ENCODE measurements at regions of chr1 and their contacts with region 1.

Region 1: GRCh38 chr1:77683160-77684148 is 996 bp upstream of the ZZZ3 start:
- DNase-seq: peak; percentile 94 to 96 (median 95)
- ATAC-seq: peak; percentile 66 to 93 (median 88)
- H3K4me3 ChIP-seq: peak overlapping the region; percentile 47 to 88 (median 70)
- H3K27ac ChIP-seq: peak overlapping the region; percentile 86 to 99 (median 94)
- H3K4me1 ChIP-seq: peaks cover 0 to 43% (median 30%) of the 10 kb centered on the region in 12 donors
- H3K27me3 ChIP-seq: no peaks in the 10 kb centered on the region
- CTCF ChIP-seq: peak; percentile 83 to 98 (median 95)
- POLR2A ChIP-seq: peak in 1 of 2 donors; percentile 58

Region 2: GRCh38 chr1:77156214-77156613 is 527.2 kb before region 1 on chr1:
- intact Hi-C with region 1: loop called in 1 of 10 experiments (anchors 10 kb)
- DNase-seq: no peak
- ATAC-seq: no peak
- H3K4me3 ChIP-seq: no peak overlapping the region
- H3K27ac ChIP-seq: no peak overlapping the region
- H3K4me1 ChIP-seq: no peaks in the 10 kb centered on the region
- H3K27me3 ChIP-seq: no peaks in the 10 kb centered on the region
- CTCF ChIP-seq: no peak
- POLR2A ChIP-seq: no peak

Region 3: DNA sequence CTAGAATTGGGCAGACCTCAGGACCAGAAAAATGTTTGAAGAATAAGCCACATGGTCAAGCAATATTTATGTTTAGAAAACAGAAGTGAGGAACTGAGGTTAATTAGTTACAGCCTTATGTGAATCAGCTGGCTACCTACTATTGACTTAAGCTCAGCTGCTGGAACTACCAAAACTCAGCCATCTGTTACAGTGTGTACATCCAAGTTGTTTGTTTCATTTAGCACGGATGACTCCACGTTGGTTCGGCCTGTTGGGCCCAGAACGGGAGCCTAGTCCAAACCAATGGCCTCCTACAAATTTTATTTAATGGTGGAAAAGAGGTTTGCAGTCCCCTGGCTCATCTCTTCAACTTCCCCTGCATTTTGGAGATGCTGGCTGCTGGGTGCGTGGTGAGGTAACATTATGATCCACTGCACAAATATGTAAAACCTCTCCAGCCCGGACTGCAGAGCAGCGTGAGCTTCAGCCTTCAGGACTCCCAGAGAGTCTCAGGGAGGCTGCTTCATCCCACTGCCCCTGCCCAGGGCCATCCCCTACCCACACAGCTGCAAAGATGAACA is 144.4 kb before region 1 on chr1:
- intact Hi-C with region 1: loop called in 2 of 10 experiments (anchors 5 to 10 kb)
- DNase-seq: peak in 2 of 5 donors; percentile 29 to 33
- ATAC-seq: peak; percentile 54 to 84 (median 69)
- H3K4me3 ChIP-seq: no peak overlapping the region
- H3K27ac ChIP-seq: peak overlapping the region in 8 of 12 donors; percentile 11 to 68 (median 44)
- H3K4me1 ChIP-seq: peaks cover 0 to 17% (median 6%) of the 10 kb centered on the region in 12 donors
- H3K27me3 ChIP-seq: no peaks in the 10 kb centered on the region
- CTCF ChIP-seq: no peak
- POLR2A ChIP-seq: no peak

Region 4: GRCh38 chr1:77565321-77565720 is 118.1 kb before region 1 on chr1:
- intact Hi-C with region 1: loop called in 1 of 10 experiments (anchors 10 kb)
- DNase-seq: no peak
- ATAC-seq: peak in 3 of 4 donors; percentile 11 to 70 (median 55)
- H3K4me3 ChIP-seq: no peak overlapping the region
- H3K27ac ChIP-seq: no peak overlapping the region
- H3K4me1 ChIP-seq: peaks cover 0 to 12% (median 6%) of the 10 kb centered on the region in 12 donors
- H3K27me3 ChIP-seq: no peaks in the 10 kb centered on the region
- CTCF ChIP-seq: no peak
- POLR2A ChIP-seq: no peak